ENCODE measurements at regions of chr17 and their contacts with region 1.

Region 1: DNA sequence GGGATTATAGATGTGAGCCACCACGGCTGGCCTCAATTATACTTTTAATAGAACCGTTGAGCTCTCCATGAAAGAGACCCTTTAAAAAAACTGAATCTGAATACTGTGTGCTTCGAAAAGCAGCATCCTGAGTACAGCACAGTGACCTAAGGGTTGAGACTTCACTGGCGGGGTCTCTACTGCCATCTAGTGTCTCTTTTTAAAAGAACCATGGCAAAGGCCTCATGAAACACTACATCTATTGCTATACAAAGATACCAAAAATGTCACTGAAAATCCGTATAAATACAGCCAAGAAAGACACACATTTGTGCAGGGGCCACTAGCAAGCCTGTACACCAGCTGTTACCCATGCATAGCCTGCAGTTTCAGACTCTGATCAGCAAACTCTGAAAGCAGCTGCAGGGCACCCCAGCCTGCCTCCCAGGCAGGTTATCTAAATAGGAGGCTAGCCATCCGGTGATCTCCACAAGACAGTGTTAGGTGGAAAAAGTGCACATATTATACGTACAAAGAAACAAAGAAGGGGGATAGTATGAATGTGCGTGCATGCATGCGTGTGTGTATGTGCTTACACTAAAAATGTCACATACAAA is 35.3 kb downstream of the NPLOC4 start:
- DNase-seq: peak; percentile 59 to 69
- H3K4me3 ChIP-seq: no peak overlapping the region
- H3K4me3 Mint-ChIP-seq: no peak overlapping the region
- H3K27ac Mint-ChIP-seq: no peak overlapping the region
- H3K4me1 ChIP-seq: no peaks in the 10 kb centered on the region
- H3K4me1 Mint-ChIP-seq: no peaks in the 10 kb centered on the region
- H3K27me3 ChIP-seq: no peaks in the 10 kb centered on the region
- H3K27me3 Mint-ChIP-seq: no peaks in the 10 kb centered on the region
- CTCF ChIP-seq: peak; percentile 78 to 82

Region 2: GRCh38 chr17:81253358-81254131 is 348.1 kb before region 1 on chr17:
- CTCF ChIA-PET with region 1: no interaction called
- POLR2A ChIA-PET with region 1: no interaction called
- intact Hi-C with region 1: loop called (anchors 1 kb)
- DNase-seq: peak in 1 of 2 experiments; percentile 66
- H3K4me3 ChIP-seq: no peak overlapping the region
- H3K4me3 Mint-ChIP-seq: no peak overlapping the region
- H3K27ac Mint-ChIP-seq: no peak overlapping the region
- H3K4me1 ChIP-seq: no peaks in the 10 kb centered on the region
- H3K4me1 Mint-ChIP-seq: no peaks in the 10 kb centered on the region
- H3K27me3 ChIP-seq: no peaks in the 10 kb centered on the region
- H3K27me3 Mint-ChIP-seq: no peaks in the 10 kb centered on the region
- CTCF ChIP-seq: peak; percentile 64 to 94

Region 3: GRCh38 chr17:81519284-81519955 is 82.2 kb before region 1 on chr17:
- CTCF ChIA-PET with region 1: no interaction called
- POLR2A ChIA-PET with region 1: no interaction called
- intact Hi-C with region 1: loop called (anchors 2 kb)
- DNase-seq: peak; percentile 88 to 93
- H3K4me3 ChIP-seq: peak overlapping the region; percentile 74
- H3K4me3 Mint-ChIP-seq: peak overlapping the region; percentile 77
- H3K27ac Mint-ChIP-seq: peak overlapping the region; percentile 74
- H3K4me1 ChIP-seq: peaks cover 33% of the 10 kb centered on the region
- H3K4me1 Mint-ChIP-seq: peaks cover 20% of the 10 kb centered on the region
- H3K27me3 ChIP-seq: no peaks in the 10 kb centered on the region
- H3K27me3 Mint-ChIP-seq: no peaks in the 10 kb centered on the region
- CTCF ChIP-seq: peak; percentile 66 to 92

Measured in Caco-2 (cell line).